CD4-positive, alpha-beta T cell (primary cell): ENCODE measurements at regions of chr6 and their contacts with region 1.

Region 1: DNA sequence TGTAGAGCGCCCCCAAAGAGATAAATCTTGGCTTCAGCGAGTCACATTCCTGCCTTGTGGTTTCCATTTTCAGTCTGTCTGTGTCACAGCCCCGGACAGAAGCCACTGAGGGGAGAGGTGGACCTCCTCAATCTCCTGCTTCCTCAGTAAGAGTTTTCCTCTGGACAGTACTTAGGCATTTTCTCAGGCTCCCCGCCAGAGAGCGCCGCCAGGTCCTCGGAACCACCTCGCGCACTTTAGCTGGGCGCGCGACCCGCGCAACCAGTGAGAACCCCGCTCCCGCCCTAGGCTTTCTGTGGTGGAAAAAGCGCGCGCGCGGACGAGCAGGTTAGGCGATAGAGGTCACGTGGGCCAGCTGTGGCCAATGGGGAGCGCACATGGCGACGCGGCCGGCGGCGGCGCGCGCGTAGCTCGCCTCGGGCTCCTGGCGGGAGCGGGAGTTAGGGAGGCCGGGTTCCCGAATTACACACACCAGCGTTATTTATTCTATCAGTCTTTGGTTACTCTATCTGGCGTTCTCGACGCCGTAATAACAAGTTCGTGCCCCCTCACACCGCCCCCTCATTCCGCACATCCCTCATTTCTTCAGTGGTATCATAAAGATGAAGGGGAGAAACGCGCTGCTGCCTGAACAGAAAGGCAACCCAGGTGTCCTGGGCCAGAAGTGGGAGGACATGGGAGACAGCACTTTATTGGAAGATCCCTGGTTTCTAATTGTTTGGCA is 19.4 kb downstream of the PXT1 start:
- DNase-seq: peak; percentile 96 to 99 (median 98)
- ATAC-seq: peak; percentile 95
- H3K4me3 ChIP-seq: peak overlapping the region; percentile 83
- H3K4me3 Mint-ChIP-seq: peak overlapping the region; percentile 92
- H3K27ac ChIP-seq: peak overlapping the region; percentile 57 to 68
- H3K27ac Mint-ChIP-seq: peak overlapping the region; percentile 82
- H3K4me1 ChIP-seq: peaks cover 11% of the 10 kb centered on the region
- H3K4me1 Mint-ChIP-seq: peaks cover 18% of the 10 kb centered on the region
- H3K27me3 ChIP-seq: no peaks in the 10 kb centered on the region
- H3K27me3 Mint-ChIP-seq: no peaks in the 10 kb centered on the region
- CTCF ChIP-seq: peak; percentile 70

Region 2: GRCh38 chr6:36442671-36443470 is 19.6 kb after region 1 on chr6 and contains the starts of genes KCTD20 and PXT1:
- CTCF ChIA-PET with region 1: interaction called, 10 read pairs
- POLR2A ChIA-PET with region 1: interaction called, 10 read pairs
- intact Hi-C with region 1: loop called (anchors 1 kb)
- DNase-seq: peak; percentile 69 to 93 (median 80)
- ATAC-seq: peak; percentile 75
- H3K4me3 ChIP-seq: peak within 1 kb of the TSS; percentile 97
- H3K4me3 Mint-ChIP-seq: peak within 1 kb of the TSS; percentile 99
- H3K27ac ChIP-seq: peak within 1 kb of the TSS; percentile 85 to 92
- H3K27ac Mint-ChIP-seq: peak within 1 kb of the TSS; percentile 97
- H3K4me1 ChIP-seq: peaks cover 27% of the 10 kb centered on the region
- H3K4me1 Mint-ChIP-seq: peaks cover 61% of the 10 kb centered on the region
- H3K27me3 ChIP-seq: no peaks in the 10 kb centered on the region
- H3K27me3 Mint-ChIP-seq: no peaks in the 10 kb centered on the region
- CTCF ChIP-seq: no peak
- total RNA-seq, gene KCTD20: 38.4 to 39.5 TPM
- total RNA-seq, gene PXT1: 0.55 to 0.59 TPM

Region 3: DNA sequence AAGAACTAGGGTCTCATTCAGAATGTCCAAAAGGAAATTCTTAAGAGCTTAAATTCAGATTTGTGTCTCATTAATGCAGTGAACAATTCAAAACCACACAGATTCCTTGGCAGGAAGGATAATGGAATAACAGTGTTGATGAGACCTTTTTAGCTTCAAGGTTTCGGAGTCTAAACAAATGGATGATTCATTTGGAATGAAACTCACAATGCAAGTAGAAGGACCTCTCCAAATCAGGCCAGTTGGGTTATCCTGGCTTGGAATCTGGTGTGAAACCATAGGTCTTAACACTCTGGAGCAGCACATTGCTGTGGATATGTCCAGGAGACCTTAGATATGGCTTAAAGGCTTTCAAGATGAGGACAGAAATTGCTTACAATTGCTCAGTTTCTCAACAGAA is 64.4 kb after region 1 on chr6:
- CTCF ChIA-PET with region 1: no interaction called
- POLR2A ChIA-PET with region 1: no interaction called
- intact Hi-C with region 1: loop called in 1 of 2 experiments (anchors 5 kb)
- DNase-seq: no peak
- ATAC-seq: no peak
- H3K4me3 ChIP-seq: no peak overlapping the region
- H3K4me3 Mint-ChIP-seq: no peak overlapping the region
- H3K27ac ChIP-seq: no peak overlapping the region
- H3K27ac Mint-ChIP-seq: peak overlapping the region; percentile 70
- H3K4me1 ChIP-seq: no peaks in the 10 kb centered on the region
- H3K4me1 Mint-ChIP-seq: peaks cover 34% of the 10 kb centered on the region
- H3K27me3 ChIP-seq: no peaks in the 10 kb centered on the region
- H3K27me3 Mint-ChIP-seq: no peaks in the 10 kb centered on the region
- CTCF ChIP-seq: no peak

Region 4: DNA sequence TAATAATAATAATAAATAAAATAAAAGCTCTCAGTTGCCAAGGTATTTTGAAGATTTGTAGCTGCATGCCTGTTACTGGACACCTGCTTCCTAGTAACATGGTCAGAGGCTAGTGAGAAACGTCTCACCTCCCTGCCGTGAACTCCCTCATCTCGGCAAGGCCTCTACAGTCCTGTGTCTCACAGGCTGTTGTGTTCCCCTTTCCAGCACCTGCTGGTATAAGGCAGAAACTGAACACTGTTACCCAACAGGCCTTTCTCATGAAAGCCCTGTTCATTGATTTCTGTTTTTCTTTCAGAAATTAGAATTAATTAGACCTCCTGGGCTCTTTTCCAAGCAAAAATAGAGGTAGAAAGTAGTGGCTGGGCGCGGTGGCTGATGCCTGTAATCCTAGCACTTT is 153.3 kb after region 1 on chr6:
- CTCF ChIA-PET with region 1: interaction called, 12 read pairs
- POLR2A ChIA-PET with region 1: interaction called, 3 read pairs
- intact Hi-C with region 1: loop called (anchors 2 to 5 kb)
- DNase-seq: no peak
- ATAC-seq: no peak
- H3K4me3 ChIP-seq: no peak overlapping the region
- H3K4me3 Mint-ChIP-seq: no peak overlapping the region
- H3K27ac ChIP-seq: no peak overlapping the region
- H3K27ac Mint-ChIP-seq: no peak overlapping the region
- H3K4me1 ChIP-seq: peaks cover 2% of the 10 kb centered on the region
- H3K4me1 Mint-ChIP-seq: peaks cover 9% of the 10 kb centered on the region
- H3K27me3 ChIP-seq: no peaks in the 10 kb centered on the region
- H3K27me3 Mint-ChIP-seq: no peaks in the 10 kb centered on the region
- CTCF ChIP-seq: no peak

Region 5: DNA sequence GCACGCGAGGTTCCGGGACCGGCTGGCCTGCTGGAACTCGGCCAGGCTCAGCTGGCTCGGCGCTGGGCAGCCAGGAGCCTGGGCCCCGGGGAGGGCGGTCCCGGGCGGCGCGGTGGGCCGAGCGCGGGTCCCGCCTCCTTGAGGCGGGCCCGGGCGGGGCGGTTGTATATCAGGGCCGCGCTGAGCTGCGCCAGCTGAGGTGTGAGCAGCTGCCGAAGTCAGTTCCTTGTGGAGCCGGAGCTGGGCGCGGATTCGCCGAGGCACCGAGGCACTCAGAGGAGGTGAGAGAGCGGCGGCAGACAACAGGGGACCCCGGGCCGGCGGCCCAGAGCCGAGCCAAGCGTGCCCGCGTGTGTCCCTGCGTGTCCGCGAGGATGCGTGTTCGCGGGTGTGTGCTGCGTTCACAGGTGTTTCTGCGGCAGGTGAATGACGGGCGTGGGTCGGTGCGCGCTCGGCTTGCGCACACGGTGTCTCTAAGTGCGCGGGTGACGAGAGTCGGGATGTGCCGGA is 255.3 kb after region 1 on chr6 and contains the start of gene CDKN1A:
- CTCF ChIA-PET with region 1: no interaction called
- POLR2A ChIA-PET with region 1: interaction called, 6 read pairs
- intact Hi-C with region 1: loop called (anchors 1 to 2 kb)
- DNase-seq: peak; percentile 46 to 90 (median 63)
- ATAC-seq: peak; percentile 39
- H3K4me3 ChIP-seq: peak within 1 kb of the TSS; percentile 87
- H3K4me3 Mint-ChIP-seq: peak within 1 kb of the TSS; percentile 93
- H3K27ac ChIP-seq: peak within 1 kb of the TSS; percentile 35 to 66
- H3K27ac Mint-ChIP-seq: peak within 1 kb of the TSS; percentile 94
- H3K4me1 ChIP-seq: peaks cover 62% of the 10 kb centered on the region
- H3K4me1 Mint-ChIP-seq: peaks cover 45% of the 10 kb centered on the region
- H3K27me3 ChIP-seq: peaks cover 0 to 2% of the 10 kb centered on the region in 2 experiments
- H3K27me3 Mint-ChIP-seq: peaks cover 8% of the 10 kb centered on the region
- CTCF ChIP-seq: no peak
- total RNA-seq, gene CDKN1A: 98.3 to 98.6 TPM

Region 6: GRCh38 chr6:36874443-36875249 is 451.4 kb after region 1 on chr6 and contains the start of gene PPIL1:
- CTCF ChIA-PET with region 1: no interaction called
- POLR2A ChIA-PET with region 1: no interaction called
- intact Hi-C with region 1: loop called in 1 of 2 experiments (anchors 10 kb)
- DNase-seq: peak; percentile 71 to 94 (median 82)
- ATAC-seq: peak; percentile 91
- H3K4me3 ChIP-seq: peak within 1 kb of the TSS; percentile 69
- H3K4me3 Mint-ChIP-seq: peak within 1 kb of the TSS; percentile 95
- H3K27ac ChIP-seq: peak within 1 kb of the TSS; percentile 80 to 82
- H3K27ac Mint-ChIP-seq: peak within 1 kb of the TSS; percentile 95
- H3K4me1 ChIP-seq: peaks cover 14% of the 10 kb centered on the region
- H3K4me1 Mint-ChIP-seq: peaks cover 45% of the 10 kb centered on the region
- H3K27me3 ChIP-seq: peaks cover 0 to 5% of the 10 kb centered on the region in 2 experiments
- H3K27me3 Mint-ChIP-seq: peaks cover 17% of the 10 kb centered on the region
- CTCF ChIP-seq: no peak
- total RNA-seq, gene PPIL1: 1.8 to 2.2 TPM